ENCODE measurements at regions of chr11 and their contacts with region 1.

Region 1: DNA sequence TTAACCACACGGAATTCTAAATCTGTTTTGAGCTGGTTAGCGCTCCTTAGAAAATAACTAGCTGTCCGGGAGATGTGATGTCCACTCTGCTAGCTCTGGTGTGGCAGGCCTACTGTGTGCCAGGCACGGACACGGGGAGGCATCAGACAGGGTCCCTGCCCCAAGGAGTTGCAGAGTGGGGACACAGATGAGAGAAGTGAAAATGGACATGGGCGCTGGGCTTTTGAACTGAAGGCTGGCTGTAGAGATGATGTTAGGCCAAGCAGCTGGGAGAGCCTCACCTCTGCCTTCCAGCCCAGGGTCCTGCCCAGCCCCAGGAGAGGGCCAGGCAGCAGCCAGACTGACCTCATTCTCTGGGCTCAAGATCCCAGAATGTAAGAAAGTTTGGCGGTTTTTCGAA is 368.6 kb downstream of the CTTN start:
- DNase-seq: no peak
- CTCF ChIP-seq: no peak

Region 2: GRCh38 chr11:70755410-70756161 is 11.3 kb before region 1 on chr11:
- CTCF ChIA-PET with region 1: interaction called, 10 read pairs
- POLR2A ChIA-PET with region 1: no interaction called
- DNase-seq: peak; percentile 91
- CTCF ChIP-seq: peak; percentile 97

Region 3: GRCh38 chr11:70818351-70818750 is 51.5 kb after region 1 on chr11:
- CTCF ChIA-PET with region 1: no interaction called
- POLR2A ChIA-PET with region 1: no interaction called
- DNase-seq: no peak
- CTCF ChIP-seq: no peak